CD8-positive, alpha-beta T cell (primary cell): ENCODE measurements at regions of chr1 and their contacts with region 1.

Region 1: DNA sequence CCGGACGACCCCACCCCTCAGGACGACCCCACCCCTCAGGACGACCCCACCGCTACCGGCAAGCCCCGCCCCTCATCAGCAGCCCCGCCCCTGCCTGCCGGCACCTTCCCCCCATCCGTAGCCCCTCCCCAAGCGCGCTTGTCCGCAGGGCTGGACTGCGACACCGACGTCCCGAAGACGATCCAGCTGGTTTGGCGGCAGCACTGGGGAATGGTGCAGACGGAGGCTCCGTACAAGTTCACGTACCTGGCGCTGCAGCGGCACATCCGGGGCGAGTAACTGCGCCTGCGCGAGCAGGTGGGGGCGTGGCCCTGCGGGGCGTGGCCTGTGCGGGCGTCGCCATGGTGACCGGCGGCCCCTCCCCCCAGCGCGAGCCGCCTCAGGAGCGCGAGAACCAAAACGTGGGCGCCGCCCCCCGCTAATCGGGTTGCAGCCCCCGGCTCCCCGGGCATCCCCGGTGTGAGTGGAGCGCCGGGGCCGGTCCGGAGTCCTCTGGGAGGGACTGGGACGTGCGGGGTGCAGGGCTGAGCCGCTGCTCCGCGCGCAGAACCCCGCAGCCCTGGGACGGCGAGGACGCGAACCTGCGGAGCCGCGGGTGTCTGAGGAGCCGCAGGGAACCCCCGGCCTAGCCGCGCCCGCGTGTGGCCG is 4.9 kb downstream of the RNF223 start:
- DNase-seq: peak; percentile 86 to 97 (median 89)
- ATAC-seq: peak; percentile 58
- H3K4me3 ChIP-seq: peak overlapping the region; percentile 65 to 88
- H3K4me3 Mint-ChIP-seq: peak overlapping the region; percentile 81
- H3K27ac ChIP-seq: peak overlapping the region; percentile 53 to 55
- H3K27ac Mint-ChIP-seq: peak overlapping the region; percentile 80
- H3K4me1 ChIP-seq: peaks cover 20% of the 10 kb centered on the region
- H3K4me1 Mint-ChIP-seq: peaks cover 7% of the 10 kb centered on the region
- H3K27me3 ChIP-seq: peaks cover 0 to 8% of the 10 kb centered on the region in 2 experiments
- H3K27me3 Mint-ChIP-seq: no peaks in the 10 kb centered on the region
- CTCF ChIP-seq: no peak

Region 2: DNA sequence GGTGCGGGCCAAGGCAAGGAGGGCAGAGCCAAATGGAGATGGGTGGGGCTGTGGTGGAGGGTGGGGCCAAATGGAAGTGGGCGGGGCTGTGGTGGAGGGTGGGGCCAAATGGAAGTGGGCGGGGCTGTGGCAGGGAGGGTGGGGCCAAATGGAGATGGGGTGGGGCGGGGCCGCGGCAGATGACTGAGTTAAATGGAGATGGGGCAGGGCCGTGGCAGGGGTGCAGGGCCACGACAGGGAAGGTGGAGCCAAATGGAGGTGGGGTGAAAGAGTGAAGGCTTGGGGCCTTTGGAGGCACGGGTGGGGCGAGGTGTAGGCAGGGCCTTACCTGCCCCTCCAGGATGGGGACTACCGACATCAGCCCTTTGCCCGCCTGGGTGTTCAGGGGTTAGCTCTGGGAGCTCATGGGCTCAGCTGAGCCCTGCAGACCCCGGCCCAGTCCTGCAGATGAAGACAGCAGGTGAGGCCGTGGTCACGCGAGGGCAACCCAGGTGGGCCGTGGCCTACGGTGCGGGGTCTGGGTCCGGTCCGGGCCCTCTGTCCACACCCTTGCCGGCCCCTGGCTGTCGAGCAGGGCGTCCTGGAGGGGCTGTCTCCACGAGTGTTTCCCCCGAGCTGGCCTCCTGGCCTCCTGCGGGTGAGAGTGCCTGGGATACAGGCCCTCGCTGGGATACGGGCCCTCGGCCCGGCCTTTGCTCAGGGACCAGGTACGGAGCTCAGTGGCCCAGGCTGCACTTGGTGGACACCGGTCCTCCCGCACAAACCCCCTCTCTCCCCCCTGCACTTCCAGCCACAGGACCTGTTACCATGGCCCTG is 22.7 kb after region 1 on chr1:
- CTCF ChIA-PET with region 1: no interaction called
- POLR2A ChIA-PET with region 1: no interaction called
- intact Hi-C with region 1: loop called in 1 of 2 experiments (anchors 1 kb)
- DNase-seq: peak in 2 of 9 experiments; percentile 21 to 31
- ATAC-seq: peak; percentile 59
- H3K4me3 ChIP-seq: no peak overlapping the region
- H3K4me3 Mint-ChIP-seq: no peak overlapping the region
- H3K27ac ChIP-seq: no peak overlapping the region
- H3K27ac Mint-ChIP-seq: no peak overlapping the region
- H3K4me1 ChIP-seq: no peaks in the 10 kb centered on the region
- H3K4me1 Mint-ChIP-seq: no peaks in the 10 kb centered on the region
- H3K27me3 ChIP-seq: no peaks in the 10 kb centered on the region
- H3K27me3 Mint-ChIP-seq: no peaks in the 10 kb centered on the region
- CTCF ChIP-seq: no peak